BJ (cell line): ENCODE measurements at regions of chr14 and their contacts with region 1.

Region 1: GRCh38 chr14:75088574-75089373 is 19.3 kb downstream of the ZC2HC1C start:
- DNase-seq: no peak
- H3K4me3 ChIP-seq: no peak overlapping the region
- H3K27me3 ChIP-seq: no peaks in the 10 kb centered on the region
- CTCF ChIP-seq: peak; percentile 76

Region 2: DNA sequence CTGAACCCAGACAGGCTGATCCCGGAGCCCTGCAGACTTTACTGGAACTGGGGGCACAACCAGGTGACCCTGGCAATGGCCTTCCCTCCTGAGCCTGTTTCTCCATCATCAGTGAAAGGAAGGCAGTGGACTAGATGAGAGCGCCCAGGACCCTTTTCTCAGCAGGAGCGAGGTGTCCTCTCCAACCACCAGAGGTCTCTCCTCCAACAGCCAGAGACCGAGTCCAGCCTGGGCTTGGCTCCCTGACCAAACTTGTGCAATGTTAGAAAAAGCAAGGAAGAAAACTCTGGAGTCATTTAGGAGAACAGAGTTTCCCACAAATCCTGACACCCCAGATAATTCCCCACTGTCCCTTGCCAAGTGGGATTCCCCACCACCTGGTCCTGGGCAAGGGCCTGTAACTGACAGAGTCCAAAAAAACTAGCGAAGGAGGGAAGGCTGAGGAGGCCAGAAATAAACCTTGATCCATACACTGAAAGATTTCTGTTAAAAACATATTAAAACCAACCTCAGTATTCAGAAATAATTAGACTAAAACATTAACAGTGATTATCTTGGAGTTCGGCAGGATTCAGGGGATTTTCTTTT is 174.7 kb before region 1 on chr14:
- CTCF ChIA-PET with region 1: interaction called, 107 read pairs
- POLR2A ChIA-PET with region 1: no interaction called
- DNase-seq: no peak
- H3K4me3 ChIP-seq: no peak overlapping the region
- H3K27me3 ChIP-seq: no peaks in the 10 kb centered on the region
- CTCF ChIP-seq: peak; percentile 93

Region 3: DNA sequence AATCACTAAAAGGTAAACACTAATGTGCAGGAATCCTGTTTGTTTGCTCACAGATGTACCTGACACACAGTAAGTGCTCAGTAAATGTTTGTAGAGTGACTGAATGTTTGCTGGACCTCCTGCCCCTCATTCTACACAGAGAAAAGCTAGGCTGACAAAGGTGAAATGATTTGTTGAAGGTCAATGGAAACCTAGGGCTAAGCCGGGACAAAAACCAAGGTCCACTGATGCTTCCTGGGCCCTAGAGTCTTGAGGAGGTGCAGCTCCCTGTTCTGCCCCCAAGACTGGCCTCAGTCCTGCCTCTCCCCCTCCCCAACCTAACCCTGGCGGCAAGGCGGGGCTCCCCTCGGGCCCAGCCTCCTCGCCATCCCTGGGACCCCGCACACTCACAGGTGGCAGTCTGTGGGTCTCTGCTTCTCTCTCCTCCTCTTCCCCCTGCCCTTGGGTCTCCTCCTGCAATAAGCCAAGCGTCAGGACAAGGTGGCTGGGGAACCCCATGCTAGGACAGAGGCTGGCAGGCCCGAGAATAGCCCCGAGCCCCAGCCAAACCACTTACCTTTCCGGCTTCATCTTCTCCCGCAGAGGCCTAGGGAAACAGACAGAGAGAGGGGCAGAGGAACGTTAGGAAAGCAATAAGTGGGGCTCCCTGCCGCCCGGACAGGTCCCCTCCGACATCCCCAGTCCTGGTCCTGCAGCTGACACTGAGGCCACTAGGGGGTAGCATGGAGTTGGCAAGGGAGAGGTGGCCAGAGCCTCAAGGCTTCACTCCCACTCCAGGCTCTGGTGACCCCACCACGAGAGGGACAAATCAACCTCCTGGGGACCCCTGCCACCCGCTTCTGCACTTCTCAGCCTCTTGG is 142.7 kb before region 1 on chr14:
- CTCF ChIA-PET with region 1: interaction called, 105 read pairs
- POLR2A ChIA-PET with region 1: no interaction called
- DNase-seq: no peak
- H3K4me3 ChIP-seq: no peak overlapping the region
- H3K27me3 ChIP-seq: no peaks in the 10 kb centered on the region; the same call in 1 of the 2 replicates
- CTCF ChIP-seq: peak; percentile 96

Region 4: DNA sequence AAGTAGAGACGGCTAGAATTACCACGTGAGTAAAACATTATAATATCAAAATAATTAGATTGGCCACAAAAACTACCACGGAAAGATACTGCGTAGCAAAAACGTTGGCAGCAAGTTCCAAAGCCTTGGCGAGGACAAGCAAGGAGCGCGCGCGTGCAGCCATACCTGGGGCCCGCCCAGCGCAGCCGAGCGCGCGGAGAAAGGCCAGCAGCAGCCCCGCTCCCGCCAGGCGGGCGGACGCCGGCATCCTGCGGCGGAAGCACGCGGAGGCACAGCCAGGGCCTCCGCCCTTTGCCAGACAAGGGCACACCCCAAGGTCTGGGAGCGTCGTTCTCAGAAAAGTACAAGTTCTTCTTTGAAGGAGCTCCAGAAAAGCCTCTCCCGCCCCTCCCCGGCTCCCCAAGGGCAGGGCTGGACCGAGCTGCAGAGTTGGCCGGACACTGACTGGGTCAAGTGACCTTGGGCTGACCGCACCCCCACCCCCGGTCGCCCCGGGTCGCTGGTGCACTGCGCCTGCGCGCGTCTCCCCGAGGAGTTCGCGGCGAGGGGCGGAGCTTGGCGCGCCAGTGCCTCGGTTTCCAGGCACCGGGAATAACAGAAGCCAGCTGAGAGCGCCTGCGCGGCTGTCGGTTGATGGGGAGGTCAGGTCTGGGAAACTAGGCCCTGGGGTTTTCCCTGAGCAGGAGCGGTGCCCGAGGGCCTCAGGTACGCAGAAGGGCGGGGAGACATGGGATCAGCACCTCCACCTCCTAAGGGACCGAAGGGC is 19.5 kb before region 1 on chr14 and contains the start of gene ZC2HC1C:
- CTCF ChIA-PET with region 1: interaction called, 22 read pairs
- POLR2A ChIA-PET with region 1: no interaction called
- DNase-seq: no peak
- H3K4me3 ChIP-seq: peak within 1 kb of the TSS; percentile 54
- H3K27me3 ChIP-seq: no peaks in the 10 kb centered on the region
- CTCF ChIP-seq: no peak
- polyA plus RNA-seq, gene ZC2HC1C: 0.85 and 1.2 TPM in 2 replicates

Region 5: DNA sequence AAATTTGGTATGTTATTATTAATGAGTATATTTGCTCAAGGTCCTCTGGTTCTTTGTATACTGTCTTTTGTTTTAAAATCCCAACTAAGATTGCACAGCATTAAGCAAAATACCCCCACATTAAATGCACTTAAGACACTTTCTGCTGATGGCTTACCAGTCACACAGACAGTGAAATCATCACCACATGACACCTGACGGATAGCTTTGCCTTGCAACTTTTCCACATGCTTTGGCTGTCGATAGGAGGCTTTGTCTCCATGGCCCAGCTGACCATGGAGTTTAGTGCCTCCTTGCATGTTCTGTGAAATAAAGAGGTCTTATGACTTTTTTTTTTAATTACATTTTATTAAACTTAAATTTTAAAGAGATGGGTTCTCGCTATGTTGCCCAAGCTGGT is 18.4 kb after region 1 on chr14:
- CTCF ChIA-PET with region 1: interaction called, 13 read pairs
- POLR2A ChIA-PET with region 1: no interaction called
- DNase-seq: no peak
- H3K4me3 ChIP-seq: no peak overlapping the region
- H3K27me3 ChIP-seq: no peaks in the 10 kb centered on the region
- CTCF ChIP-seq: no peak

Region 6: GRCh38 chr14:75230140-75231045 is 141.6 kb after region 1 on chr14:
- CTCF ChIA-PET with region 1: no interaction called
- POLR2A ChIA-PET with region 1: no interaction called
- DNase-seq: no peak
- H3K4me3 ChIP-seq: no peak overlapping the region
- H3K27me3 ChIP-seq: no peaks in the 10 kb centered on the region
- CTCF ChIP-seq: no peak; the same call in 1 of the 2 replicates